ENCODE measurements at regions of chr2 and their contacts with region 1.

Region 1: GRCh38 chr2:1742681-1743395 is 1.5 kb downstream of the PXDN start:
- DNase-seq: peak; percentile 67 to 95
- H3K4me3 ChIP-seq: peak overlapping the region; percentile 80 to 92
- H3K27ac ChIP-seq: peak overlapping the region; percentile 99 to 100
- H3K4me1 ChIP-seq: peaks cover 4 to 30% of the 10 kb centered on the region in 2 donors
- H3K27me3 ChIP-seq: no peaks in the 10 kb centered on the region
- CTCF ChIP-seq: peak; percentile 42 to 73 (median 54)

Region 2: DNA sequence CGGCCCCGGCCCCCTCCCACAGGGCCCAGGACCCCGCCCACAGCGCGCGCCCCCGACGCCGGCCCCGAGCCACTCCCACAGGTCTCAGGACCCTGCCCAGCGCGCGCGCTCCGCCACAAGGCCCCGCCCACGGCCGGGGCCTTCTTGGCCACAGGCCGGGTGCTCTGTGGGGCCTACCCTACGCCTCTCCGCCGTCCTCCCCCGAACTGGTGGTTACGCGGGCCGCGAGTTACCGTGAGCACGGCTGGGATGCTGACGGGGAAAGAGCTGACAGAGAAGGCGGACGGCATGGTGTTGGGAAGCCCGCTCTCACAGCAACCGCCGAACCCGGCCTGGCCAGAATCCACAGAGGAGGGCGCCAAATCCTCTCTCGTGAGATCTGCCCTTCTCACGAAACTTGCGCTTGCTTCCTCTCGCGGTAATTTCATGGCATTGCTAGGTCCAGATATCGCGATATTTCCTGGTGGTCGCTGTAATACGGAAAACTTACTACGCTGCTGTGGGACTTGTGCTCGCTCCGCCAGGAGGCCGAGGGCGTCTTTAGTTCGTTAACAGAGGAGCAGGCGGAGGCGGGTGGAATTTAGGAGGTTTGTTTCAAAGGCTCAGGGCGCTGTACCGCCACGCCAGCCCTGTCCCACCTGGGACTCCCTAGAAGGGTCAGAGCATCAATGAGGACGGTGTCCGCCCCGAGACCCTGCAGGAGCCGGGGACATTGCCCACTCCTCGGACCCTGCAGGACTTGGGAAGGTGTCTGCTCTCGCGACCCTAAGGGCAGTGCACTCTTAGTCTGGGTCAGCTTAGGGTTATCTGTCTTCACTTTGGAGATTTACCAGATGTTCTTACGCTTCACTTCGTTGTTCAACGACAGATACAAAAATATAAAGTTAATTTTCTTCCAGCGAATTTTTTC is 1065.5 kb before region 1 on chr2 and contains the start of gene TMEM18:
- intact Hi-C with region 1: loop called (anchors 1 kb)
- DNase-seq: peak; percentile 84 to 98
- H3K4me3 ChIP-seq: peak within 1 kb of the TSS; percentile 60 to 88
- H3K27ac ChIP-seq: peak within 1 kb of the TSS; percentile 94
- H3K4me1 ChIP-seq: no peaks in the 10 kb centered on the region
- H3K27me3 ChIP-seq: no peaks in the 10 kb centered on the region
- CTCF ChIP-seq: peak in 2 of 3 experiments; percentile 7 to 34
- total RNA-seq, gene TMEM18: 6.4 TPM

Region 3: GRCh38 chr2:1550658-1551316 is 192.1 kb before region 1 on chr2:
- intact Hi-C with region 1: loop called (anchors 5 kb)
- DNase-seq: peak in 1 of 2 donors; percentile 69
- H3K4me3 ChIP-seq: no peak overlapping the region
- H3K27ac ChIP-seq: no peak overlapping the region
- H3K4me1 ChIP-seq: peaks cover 0 to 4% of the 10 kb centered on the region in 2 donors
- H3K27me3 ChIP-seq: no peaks in the 10 kb centered on the region
- CTCF ChIP-seq: peak; percentile 65 to 98 (median 92)

Region 4: DNA sequence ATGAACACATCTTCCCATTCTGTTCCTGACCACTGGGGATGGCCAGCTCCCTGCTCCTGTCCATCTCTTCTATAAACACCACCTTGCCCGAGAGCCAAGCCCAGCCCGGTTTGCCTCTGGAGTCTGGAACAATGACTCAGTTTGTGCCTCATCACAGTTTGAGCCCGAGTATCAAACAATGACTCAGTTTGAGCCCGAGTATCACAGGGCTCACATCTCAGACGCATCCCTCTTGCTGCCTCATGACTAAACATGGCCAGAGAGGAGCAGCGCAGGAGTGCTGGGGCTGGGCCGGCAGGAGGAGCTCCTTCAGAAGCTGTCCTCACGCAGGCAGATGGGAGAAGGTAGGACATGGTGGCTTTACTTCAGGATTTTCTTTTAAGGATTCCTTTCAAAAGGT is 67.2 kb before region 1 on chr2:
- intact Hi-C with region 1: loop called (anchors 2 kb)
- DNase-seq: peak; percentile 39 to 86
- H3K4me3 ChIP-seq: no peak overlapping the region
- H3K27ac ChIP-seq: peak overlapping the region; percentile 49 to 76
- H3K4me1 ChIP-seq: peaks cover 0 to 8% of the 10 kb centered on the region in 2 donors
- H3K27me3 ChIP-seq: no peaks in the 10 kb centered on the region
- CTCF ChIP-seq: peak; percentile 19 to 53 (median 35)

Region 5: GRCh38 chr2:1707771-1708418 is 34.9 kb before region 1 on chr2:
- intact Hi-C with region 1: loop called (anchors 5 kb)
- DNase-seq: peak in 1 of 2 donors; percentile 79
- H3K4me3 ChIP-seq: peak overlapping the region; percentile 6 to 48
- H3K27ac ChIP-seq: peak overlapping the region; percentile 75 to 76
- H3K4me1 ChIP-seq: peaks cover 4 to 24% of the 10 kb centered on the region in 2 donors
- H3K27me3 ChIP-seq: no peaks in the 10 kb centered on the region
- CTCF ChIP-seq: no peak

Region 6: GRCh38 chr2:1730015-1730927 is 12.6 kb before region 1 on chr2:
- intact Hi-C with region 1: loop called (anchors 1 kb)
- DNase-seq: peak in 1 of 2 donors; percentile 69
- H3K4me3 ChIP-seq: peak overlapping the region in 1 of 2 donors; percentile 41
- H3K27ac ChIP-seq: peak overlapping the region; percentile 87 to 94
- H3K4me1 ChIP-seq: peaks cover 12 to 51% of the 10 kb centered on the region in 2 donors
- H3K27me3 ChIP-seq: no peaks in the 10 kb centered on the region
- CTCF ChIP-seq: no peak

Region 7: DNA sequence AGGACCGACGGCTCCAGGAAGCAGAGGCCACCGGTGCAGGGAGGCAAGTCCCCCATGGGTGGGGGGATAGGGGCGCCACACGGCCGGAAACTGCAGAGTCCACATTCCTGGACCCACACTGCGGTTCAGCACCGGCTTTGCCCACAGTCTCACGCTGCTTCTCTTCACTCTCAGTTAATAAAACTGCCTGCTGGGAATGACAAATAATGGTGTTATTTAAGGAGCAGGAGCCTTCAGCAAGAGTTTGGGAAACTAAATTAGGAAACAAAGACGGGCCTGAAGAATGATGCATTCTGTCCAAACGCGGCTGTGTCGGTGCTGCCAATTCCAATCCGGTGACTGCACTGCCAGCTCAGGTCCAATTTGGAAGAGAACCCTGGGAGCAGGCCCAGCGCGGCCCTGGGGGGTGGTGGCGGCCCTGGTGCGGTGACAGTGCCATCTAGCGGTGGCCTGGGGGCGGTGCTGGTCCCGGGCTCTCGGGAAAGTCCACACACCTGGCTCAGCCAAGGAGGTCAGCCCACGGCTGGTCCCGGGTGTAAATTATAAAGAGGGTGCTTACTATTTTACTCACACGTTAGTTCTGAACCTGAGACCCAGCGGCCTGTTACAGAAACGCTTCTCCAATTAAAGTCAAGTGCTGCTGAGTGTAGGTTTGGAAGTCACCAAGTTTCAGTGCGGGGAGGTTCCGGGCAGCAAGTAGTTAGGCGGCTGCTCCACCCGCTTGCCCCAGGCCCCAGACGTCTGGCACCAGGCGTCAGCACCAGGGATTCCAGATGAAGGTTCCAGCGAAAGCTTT is 74.6 kb after region 1 on chr2:
- intact Hi-C with region 1: loop called (anchors 1 kb)
- DNase-seq: peak; percentile 80 to 98
- H3K4me3 ChIP-seq: peak overlapping the region in 1 of 2 donors; percentile 43
- H3K27ac ChIP-seq: peak overlapping the region; percentile 90 to 98
- H3K4me1 ChIP-seq: peaks cover 5 to 32% of the 10 kb centered on the region in 2 donors
- H3K27me3 ChIP-seq: no peaks in the 10 kb centered on the region
- CTCF ChIP-seq: peak; percentile 97 to 99 (median 99)